ENCODE measurements at regions of chr15 and their contacts with region 1.

Region 1: GRCh38 chr15:75201609-75202250 is at the start of gene C15orf39:
- DNase-seq: peak in 9 of 10 donors; percentile 23 to 78 (median 40)
- H3K4me3 ChIP-seq: peak within 1 kb of the TSS; percentile 40 to 82 (median 73)
- H3K27ac ChIP-seq: peak within 1 kb of the TSS in 55 of 59 donors; percentile 36 to 95 (median 79)
- H3K27me3 ChIP-seq: no peaks in the 10 kb centered on the region
- CTCF ChIP-seq: peak; percentile 39 to 95 (median 76)
- total RNA-seq, gene C15orf39: 3.7 to 15.1 (median 9.3) TPM

Region 2: DNA sequence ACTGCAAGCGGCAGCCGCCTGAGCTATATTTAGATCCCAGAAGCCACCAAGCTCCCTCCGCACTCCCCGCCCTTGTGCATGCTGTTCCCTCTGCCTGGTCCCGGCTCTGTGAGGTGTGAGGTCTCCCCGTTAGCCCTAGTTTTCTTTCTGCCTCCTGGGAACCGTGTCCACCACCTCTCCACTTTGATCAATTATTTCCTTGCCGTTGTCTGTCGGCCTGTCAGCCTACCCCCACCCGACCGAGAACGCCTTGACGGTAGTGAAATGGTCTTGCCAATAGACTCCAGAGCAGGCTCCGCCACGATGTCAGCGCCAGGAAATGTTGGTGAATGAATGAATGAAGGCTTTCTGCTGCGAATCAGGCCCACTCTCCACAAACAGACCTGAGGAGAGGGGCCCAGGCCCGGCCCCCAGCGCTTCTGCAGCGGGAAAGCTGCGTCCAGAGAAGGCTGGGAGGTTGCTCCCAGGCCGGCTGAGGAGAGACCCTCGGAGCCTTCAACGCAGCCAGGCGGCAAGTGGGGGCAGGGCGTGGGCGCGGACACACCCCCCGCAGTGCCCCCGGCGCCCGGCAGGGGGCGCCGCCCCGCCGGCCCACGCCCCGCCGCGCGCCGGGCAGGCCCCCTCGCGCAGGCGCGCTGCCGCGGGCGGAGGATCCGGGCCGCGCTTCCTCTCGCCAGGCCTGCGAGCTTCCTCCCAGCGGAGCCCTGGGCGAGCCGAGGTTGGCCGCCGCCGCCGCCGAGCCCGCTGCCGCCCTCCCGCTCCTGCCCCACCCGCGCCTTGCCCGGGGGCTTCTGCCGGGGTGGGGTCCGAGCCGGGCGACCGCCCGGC is 420.1 kb before region 1 on chr15 and contains the start of gene CSK:
- intact Hi-C with region 1: loop called in 1 of 2 experiments (anchors 10 kb)
- DNase-seq: peak in 5 of 10 donors; percentile 43 to 84 (median 46)
- H3K4me3 ChIP-seq: peak within 1 kb of the TSS; percentile 60 to 88 (median 73)
- H3K27ac ChIP-seq: peak within 1 kb of the TSS in 56 of 59 donors; percentile 15 to 89 (median 74)
- H3K27me3 ChIP-seq: no peaks in the 10 kb centered on the region
- CTCF ChIP-seq: peak in 55 of 56 donors; percentile 41 to 78 (median 62)
- total RNA-seq, gene CSK: 28.9 to 71.0 (median 41.8) TPM

Region 3: DNA sequence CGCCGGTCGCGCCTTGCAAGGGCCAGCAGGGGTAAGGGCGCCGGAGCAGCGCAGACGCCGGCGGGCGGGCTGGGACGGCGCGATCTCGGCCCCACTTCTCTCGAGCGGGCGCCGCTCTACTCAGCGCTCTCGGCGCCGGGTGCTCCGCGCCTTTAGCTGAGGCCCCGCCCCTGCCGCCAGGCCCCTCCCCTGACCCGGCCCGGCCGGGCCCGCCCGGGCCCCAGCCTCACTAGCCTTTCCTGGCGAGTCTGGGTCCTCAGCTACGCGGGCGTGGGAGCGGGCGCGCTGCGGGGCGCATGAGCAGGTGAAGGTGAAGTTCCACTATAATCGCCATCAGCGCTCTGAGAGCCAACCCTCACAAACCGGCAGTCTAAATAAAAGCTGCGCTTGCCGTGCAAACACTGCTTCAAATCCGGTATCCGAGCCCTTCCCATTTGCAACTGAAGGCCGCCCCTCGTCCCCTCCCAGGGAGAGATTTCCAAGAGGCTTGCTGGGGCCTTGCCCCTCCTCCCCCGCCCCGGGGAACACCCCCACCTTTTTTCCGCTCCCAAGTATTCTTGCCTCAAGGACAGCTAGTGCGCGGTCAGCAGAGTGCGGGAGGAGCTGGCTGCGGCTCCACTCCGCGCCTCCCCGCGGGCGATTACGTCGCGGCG is 245.0 kb before region 1 on chr15 and contains the start of gene RPP25:
- intact Hi-C with region 1: loop called in 1 of 2 experiments (anchors 5 kb)
- DNase-seq: peak; percentile 42 to 82 (median 59)
- H3K4me3 ChIP-seq: peak within 1 kb of the TSS; percentile 49 to 81 (median 67)
- H3K27ac ChIP-seq: peak within 1 kb of the TSS in 52 of 59 donors; percentile 10 to 84 (median 65)
- H3K27me3 ChIP-seq: peaks cover 0 to 20% (median 3%) of the 10 kb centered on the region in 45 donors
- CTCF ChIP-seq: no peak
- total RNA-seq, gene RPP25: 5.0 to 16.7 (median 8.5) TPM

Region 4: DNA sequence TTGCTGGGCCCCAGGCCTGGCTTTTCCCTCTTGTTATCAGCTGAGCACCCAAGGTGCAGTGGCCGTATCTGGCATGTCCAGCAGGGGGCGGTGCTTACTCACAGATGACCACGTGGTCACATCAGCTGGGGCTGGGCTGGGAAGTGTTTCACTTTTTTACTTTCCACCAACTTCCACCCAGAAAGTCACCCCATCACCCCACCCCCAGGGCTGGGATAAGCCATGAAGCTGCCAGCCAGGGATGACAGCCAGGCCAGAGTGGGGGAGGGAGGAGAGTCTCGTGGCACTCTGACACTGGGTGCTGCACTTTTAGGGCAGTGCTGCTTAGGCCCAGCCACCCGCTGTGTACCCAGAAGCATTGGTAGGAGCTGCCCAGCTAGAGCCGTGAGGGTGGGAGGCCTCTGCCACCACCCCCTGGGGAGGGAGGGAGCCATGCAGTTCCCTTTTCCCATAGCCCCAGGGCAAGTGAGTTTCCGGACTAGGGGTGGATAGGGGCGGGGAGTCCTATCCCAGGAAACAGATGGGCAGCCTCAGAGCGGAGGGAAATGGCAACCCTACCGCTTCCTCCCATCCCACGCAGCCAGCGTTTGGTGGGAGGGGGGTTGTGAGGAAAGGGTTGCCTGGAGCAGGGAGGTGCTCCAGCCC is 172.2 kb before region 1 on chr15:
- intact Hi-C with region 1: loop called (anchors 1 kb)
- DNase-seq: peak; percentile 90 to 97 (median 93)
- H3K4me3 ChIP-seq: peak overlapping the region in 20 of 59 donors; percentile 8 to 45 (median 24)
- H3K27ac ChIP-seq: peak overlapping the region in 48 of 59 donors; percentile 3 to 83 (median 60)
- H3K27me3 ChIP-seq: no peaks in the 10 kb centered on the region
- CTCF ChIP-seq: peak; percentile 89 to 99 (median 97)

Region 5: DNA sequence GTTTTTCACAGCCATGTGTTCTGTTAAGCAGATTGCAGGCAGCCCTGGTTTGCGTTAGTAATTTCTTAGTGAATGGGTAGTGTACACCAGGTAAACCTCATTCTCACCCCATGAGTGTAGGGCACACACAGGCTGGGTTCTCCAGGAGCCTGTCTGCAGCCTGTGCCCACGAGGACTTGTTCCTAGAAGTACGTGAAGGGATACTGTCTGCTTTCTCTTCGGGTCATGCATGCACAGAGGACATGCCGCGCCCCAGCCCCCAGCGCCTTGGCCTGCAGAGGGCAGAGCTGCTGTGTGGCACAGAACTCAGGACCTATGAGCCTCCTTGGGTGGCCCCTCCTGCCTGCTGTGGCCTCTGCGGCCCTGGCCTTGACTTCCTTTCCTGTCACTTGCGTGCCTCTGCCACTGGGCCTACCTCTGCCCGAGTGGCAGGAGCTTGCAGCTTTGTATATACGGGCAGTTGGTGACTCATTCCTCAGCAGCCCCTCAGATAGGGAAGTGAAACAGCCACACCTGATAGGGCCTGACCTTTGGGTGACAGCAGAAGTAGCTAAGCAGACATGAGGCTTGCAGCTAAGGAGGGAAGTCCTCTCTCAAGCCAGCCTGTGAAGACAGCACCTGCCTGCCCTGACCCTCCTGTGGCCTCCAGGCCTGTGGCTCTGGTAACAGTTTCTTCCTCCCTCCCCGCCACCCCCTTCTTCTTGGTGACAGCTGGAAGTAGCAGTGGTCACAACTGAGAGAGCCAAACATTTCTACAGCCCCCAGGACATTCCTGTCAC is 158.8 kb before region 1 on chr15:
- intact Hi-C with region 1: loop called (anchors 1 to 5 kb)
- DNase-seq: peak in 9 of 10 donors; percentile 48 to 76 (median 67)
- H3K4me3 ChIP-seq: peak overlapping the region in 42 of 59 donors; percentile 2 to 51 (median 26)
- H3K27ac ChIP-seq: peak overlapping the region; percentile 20 to 95 (median 87)
- H3K27me3 ChIP-seq: no peaks in the 10 kb centered on the region
- CTCF ChIP-seq: peak in 54 of 56 donors; percentile 17 to 64 (median 46)

Region 6: DNA sequence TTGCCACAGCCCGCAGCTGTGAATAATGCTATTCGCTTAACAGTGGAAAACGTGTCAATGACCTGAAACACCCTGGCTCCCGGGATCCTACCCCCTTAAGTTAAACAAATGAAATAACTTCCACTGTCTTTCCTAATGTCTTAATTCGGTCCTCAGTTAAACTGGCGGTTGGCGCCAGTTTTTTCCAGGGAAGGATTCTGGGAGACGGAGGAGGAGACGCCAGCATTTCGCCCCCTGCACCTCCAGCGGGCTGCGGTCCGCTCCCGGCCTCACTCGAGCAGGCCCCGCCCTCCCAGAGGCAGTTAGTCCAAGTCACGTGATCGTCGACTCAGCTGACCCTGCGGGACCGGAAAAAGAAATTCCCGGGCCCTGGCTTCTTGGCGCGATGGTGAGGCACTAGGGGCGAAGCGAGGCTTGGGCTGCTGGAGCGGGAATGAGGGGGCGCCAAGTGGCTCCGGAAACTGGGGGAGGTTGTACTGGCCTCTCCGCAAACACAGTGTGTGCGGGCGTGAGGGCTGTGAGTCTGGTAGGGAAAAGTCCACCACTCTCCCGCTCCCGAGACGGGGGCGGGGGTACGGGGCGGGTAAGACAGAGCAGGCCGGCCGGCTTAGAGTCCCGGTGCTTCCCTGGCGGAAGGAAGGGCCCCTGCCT is 134.1 kb after region 1 on chr15 and contains the start of gene COMMD4:
- intact Hi-C with region 1: loop called in 1 of 2 experiments (anchors 10 kb)
- DNase-seq: peak; percentile 93 to 97 (median 96)
- H3K4me3 ChIP-seq: peak within 1 kb of the TSS; percentile 70 to 98 (median 90)
- H3K27ac ChIP-seq: peak within 1 kb of the TSS in 54 of 59 donors; percentile 19 to 86 (median 71)
- H3K27me3 ChIP-seq: no peaks in the 10 kb centered on the region
- CTCF ChIP-seq: peak in 38 of 56 donors; percentile 12 to 57 (median 23)
- total RNA-seq, gene COMMD4: 26.8 to 67.8 (median 44.8) TPM

Region 7: GRCh38 chr15:75453703-75454470 is 252.2 kb after region 1 on chr15:
- intact Hi-C with region 1: loop called in 1 of 2 experiments (anchors 5 kb)
- DNase-seq: peak; percentile 94 to 99 (median 98)
- H3K4me3 ChIP-seq: peak overlapping the region; percentile 60 to 98 (median 91)
- H3K27ac ChIP-seq: peak overlapping the region; percentile 65 to 99 (median 95)
- H3K27me3 ChIP-seq: no peaks in the 10 kb centered on the region
- CTCF ChIP-seq: peak in 22 of 56 donors; percentile 8 to 43 (median 16)

Measured in dorsolateral prefrontal cortex (tissue), 120 donors.